H1 (cell line): ENCODE measurements at regions of chr11 and their contacts with region 1.

Region 1: GRCh38 chr11:17384002-17384511 is 4.4 kb downstream of the KCNJ11 start:
- DNase-seq: peak; percentile 58 to 83
- H3K4me3 ChIP-seq: no peak overlapping the region
- H3K27ac ChIP-seq: no peak overlapping the region
- H3K4me1 ChIP-seq: peaks cover 0 to 8% (median 0%) of the 10 kb centered on the region in 4 experiments; a peak in 1 of 7 replicates
- H3K27me3 ChIP-seq: peaks cover 0 to 2% (median 0%) of the 10 kb centered on the region in 4 experiments; a peak in 1 of 7 replicates
- CTCF ChIP-seq: peak; percentile 79 to 97 (median 94)
- EP300 ChIP-seq: no peak
- POLR2A ChIP-seq: no peak
- RAD21 ChIP-seq: peak; percentile 98 to 100

Region 2: DNA sequence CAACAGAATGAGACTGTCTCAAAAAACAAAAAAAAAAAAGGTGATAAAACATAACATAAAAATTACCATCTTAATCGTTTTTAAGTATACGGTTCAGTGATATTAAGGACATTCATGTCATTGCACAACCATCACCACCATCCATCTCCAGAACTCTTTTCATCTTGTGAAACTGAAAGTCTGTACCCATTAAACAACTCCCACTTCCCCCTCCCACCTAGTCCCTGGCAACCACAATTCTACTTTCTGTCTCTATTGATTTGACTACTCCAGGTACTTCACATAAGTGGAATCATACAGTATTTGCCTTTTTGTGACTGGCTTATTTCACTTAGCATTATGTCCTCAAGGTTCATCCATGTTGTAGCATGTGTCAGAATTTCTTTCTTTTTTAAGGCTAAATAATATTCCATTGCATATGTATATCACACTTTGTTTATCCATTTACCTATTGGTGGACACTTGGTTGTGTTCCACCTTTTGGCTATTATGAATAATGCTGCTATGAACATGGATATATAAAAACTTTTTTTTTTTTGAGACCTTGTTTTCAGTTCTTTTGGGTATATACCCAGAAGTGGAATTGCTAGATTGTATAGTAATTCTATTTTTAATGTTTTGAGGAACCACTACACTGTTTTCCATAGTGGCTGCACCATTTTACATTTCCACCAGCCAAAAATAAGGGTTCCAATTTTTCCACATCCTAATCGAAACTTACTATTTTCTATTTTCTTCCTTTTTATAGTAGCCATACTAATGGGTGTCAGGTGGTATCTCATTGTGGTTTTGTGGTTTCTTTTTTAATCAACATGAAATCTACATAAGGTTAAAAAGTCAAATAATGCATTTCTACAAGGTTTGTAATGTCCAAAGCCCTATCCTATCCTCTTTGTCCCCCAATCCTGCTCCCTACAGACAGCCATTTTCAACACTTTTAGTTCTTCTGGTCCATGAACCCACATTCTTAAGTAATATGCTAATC is 152.9 kb before region 1 on chr11:
- CTCF ChIA-PET with region 1: interaction called, 23 read pairs
- POLR2A ChIA-PET with region 1: no interaction called
- DNase-seq: no peak
- H3K4me3 ChIP-seq: no peak overlapping the region
- H3K27ac ChIP-seq: no peak overlapping the region
- H3K4me1 ChIP-seq: no peaks in the 10 kb centered on the region
- H3K27me3 ChIP-seq: no peaks in the 10 kb centered on the region
- CTCF ChIP-seq: no peak
- EP300 ChIP-seq: no peak
- POLR2A ChIP-seq: no peak
- RAD21 ChIP-seq: no peak

Region 3: GRCh38 chr11:17371614-17372013 is 12.4 kb before region 1 on chr11:
- CTCF ChIA-PET with region 1: interaction called, 40 read pairs
- POLR2A ChIA-PET with region 1: no interaction called
- DNase-seq: no peak
- H3K4me3 ChIP-seq: no peak overlapping the region
- H3K27ac ChIP-seq: no peak overlapping the region
- H3K4me1 ChIP-seq: no peaks in the 10 kb centered on the region
- H3K27me3 ChIP-seq: no peaks in the 10 kb centered on the region; a peak in 1 of 7 replicates
- CTCF ChIP-seq: no peak
- EP300 ChIP-seq: no peak
- POLR2A ChIP-seq: no peak
- RAD21 ChIP-seq: no peak

Region 4: DNA sequence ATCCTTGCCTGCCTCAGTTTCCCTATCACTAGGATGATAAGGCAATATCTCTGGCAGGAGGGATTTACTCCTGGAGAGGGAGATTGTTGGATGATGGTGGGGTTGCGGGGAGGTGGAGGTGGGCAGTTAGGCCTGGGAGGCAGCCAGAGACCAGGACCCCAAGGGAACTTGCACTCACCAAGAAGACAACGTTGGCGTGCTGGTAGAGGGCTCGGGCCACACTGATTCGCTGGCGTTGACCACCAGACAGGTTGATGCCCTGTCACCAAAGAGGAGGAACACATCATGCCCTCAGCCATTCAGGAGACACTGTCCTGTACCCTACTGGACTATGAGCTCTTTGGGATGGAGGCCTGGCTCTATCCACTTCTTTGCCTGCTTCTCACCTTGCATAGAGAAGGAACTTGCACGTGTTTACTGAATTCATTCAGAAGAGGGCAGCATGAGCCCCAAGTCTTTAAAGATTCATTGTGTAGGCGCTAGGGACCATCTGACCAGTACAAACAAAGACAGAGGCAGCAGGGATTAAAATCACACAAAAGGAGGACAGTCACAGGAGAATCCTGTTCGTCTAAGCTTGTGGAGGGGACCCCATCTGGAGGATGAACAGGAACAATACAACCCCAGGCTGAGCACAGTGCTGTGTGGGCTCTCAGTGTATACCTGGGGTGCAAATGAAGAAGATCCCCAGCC is 28.6 kb after region 1 on chr11:
- CTCF ChIA-PET with region 1: interaction called, 36 read pairs
- POLR2A ChIA-PET with region 1: interaction called, 3 read pairs
- DNase-seq: no peak
- H3K4me3 ChIP-seq: no peak overlapping the region
- H3K27ac ChIP-seq: no peak overlapping the region
- H3K4me1 ChIP-seq: peaks cover 0 to 4% (median 3%) of the 10 kb centered on the region in 4 experiments; a peak in 3 of 7 replicates
- H3K27me3 ChIP-seq: no peaks in the 10 kb centered on the region; a peak in 3 of 7 replicates
- CTCF ChIP-seq: no peak; a peak in 1 of 4 replicates
- EP300 ChIP-seq: no peak
- POLR2A ChIP-seq: no peak
- RAD21 ChIP-seq: peak; percentile 29 to 40

Region 5: GRCh38 chr11:17432002-17432401 is 47.9 kb after region 1 on chr11:
- CTCF ChIA-PET with region 1: interaction called, 16 read pairs
- POLR2A ChIA-PET with region 1: no interaction called
- DNase-seq: no peak
- H3K4me3 ChIP-seq: no peak overlapping the region
- H3K27ac ChIP-seq: no peak overlapping the region
- H3K4me1 ChIP-seq: no peaks in the 10 kb centered on the region; a peak in 1 of 7 replicates
- H3K27me3 ChIP-seq: no peaks in the 10 kb centered on the region
- CTCF ChIP-seq: no peak
- EP300 ChIP-seq: no peak
- POLR2A ChIP-seq: no peak
- RAD21 ChIP-seq: no peak

Region 6: DNA sequence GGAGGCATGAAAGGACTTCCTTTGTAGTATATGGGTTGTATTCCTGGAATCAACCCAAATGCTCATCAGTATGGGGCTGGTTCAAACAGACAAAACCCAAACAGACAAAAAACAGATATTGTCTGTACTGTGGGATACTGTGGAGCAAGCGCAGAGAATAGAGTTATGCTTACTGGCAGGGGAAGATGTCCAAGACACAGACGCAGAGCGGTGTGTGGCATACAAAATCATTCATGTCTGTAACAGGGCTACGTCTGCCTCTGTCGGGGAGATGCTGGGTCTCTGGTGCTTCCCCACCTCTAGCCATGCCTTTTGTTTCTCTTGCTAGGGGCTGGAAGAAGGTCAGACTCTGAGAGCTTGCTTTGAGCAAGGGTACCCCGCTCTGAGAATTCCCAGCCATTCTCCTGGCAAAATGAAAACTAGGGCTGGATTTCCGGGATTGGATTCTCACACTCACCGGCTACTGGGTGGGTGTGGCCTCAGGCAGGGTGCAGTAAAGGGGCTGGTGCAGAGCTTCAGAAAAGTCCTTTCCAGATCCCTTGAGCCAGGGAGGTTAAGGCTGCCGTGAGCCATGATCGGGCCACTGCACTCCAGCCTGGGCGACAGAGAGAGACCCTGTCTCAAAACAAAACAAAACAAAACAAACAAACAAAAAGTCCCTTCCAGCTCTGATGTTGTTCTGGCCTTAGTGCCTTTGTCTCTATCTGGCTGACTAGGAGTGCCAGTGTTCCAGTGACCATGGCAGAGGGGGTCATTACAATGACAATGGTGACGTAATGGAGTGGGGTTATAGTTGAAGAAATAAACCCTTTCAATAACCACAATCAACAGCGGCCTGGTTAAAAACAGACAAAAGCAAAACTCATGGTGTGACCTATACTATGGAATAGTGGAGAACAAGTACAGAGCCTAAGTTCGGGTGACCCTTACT is 95.5 kb after region 1 on chr11:
- CTCF ChIA-PET with region 1: interaction called, 111 read pairs
- POLR2A ChIA-PET with region 1: interaction called, 3 read pairs
- DNase-seq: peak; percentile 25 to 93
- H3K4me3 ChIP-seq: no peak overlapping the region
- H3K27ac ChIP-seq: no peak overlapping the region
- H3K4me1 ChIP-seq: peaks cover 4 to 8% (median 6%) of the 10 kb centered on the region in 4 experiments; a peak in 6 of 7 replicates
- H3K27me3 ChIP-seq: peaks cover 26 to 47% (median 41%) of the 10 kb centered on the region in 4 experiments
- CTCF ChIP-seq: no peak
- EP300 ChIP-seq: no peak
- POLR2A ChIP-seq: no peak
- RAD21 ChIP-seq: peak in 1 of 2 experiments; percentile 23; a peak in 1 of 4 replicates

Region 7: GRCh38 chr11:17538731-17539130 is 154.7 kb after region 1 on chr11:
- CTCF ChIA-PET with region 1: interaction called, 1,414 read pairs
- POLR2A ChIA-PET with region 1: no interaction called
- DNase-seq: no peak
- H3K4me3 ChIP-seq: no peak overlapping the region
- H3K27ac ChIP-seq: no peak overlapping the region
- H3K4me1 ChIP-seq: peaks cover 0 to 7% (median 4%) of the 10 kb centered on the region in 4 experiments; a peak in 5 of 7 replicates
- H3K27me3 ChIP-seq: peaks cover 0 to 11% (median 5%) of the 10 kb centered on the region in 4 experiments; a peak in 4 of 7 replicates
- CTCF ChIP-seq: peak in 1 of 3 experiments; percentile 20; a peak in 2 of 4 replicates
- EP300 ChIP-seq: no peak
- POLR2A ChIP-seq: no peak
- RAD21 ChIP-seq: peak in 1 of 2 experiments; percentile 24; a peak in 1 of 4 replicates